ENCODE measurements at regions of chr11 and their contacts with region 1.

Region 1: DNA sequence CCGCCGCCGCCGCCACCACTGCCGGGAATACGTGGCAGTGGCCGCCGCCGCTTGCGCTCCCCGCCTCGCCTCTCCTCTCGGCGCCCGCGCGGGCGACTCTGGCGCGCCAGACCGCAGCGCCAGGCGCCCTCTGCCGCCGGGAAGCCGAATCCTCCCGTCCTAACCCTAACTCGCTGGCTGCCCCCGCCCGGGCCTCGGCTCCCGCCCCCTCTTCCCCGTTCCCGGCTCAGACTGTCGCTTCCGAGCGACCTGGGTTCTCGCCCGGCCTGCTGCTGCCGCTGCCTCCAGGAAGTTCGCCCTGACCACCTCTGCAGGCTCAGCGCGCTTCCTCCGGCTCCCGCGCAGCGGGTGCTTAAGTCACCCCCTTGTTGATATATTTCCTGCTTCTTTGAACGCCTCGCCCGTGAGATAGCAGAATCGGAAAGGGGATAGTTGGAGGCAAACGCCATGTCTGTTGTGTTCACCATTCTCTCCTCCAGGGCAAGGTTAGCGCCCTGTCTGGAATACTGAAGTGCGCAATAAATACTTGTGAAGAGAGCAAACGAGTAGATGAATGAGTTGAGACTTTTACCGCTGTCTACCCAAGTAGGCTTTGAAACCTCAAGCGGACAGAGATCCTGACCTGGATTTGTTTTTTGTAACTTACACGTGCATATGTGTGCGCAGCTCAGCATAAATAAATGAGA is at the start of gene SMCO4:
- DNase-seq: peak; percentile 88
- ATAC-seq: peak; percentile 81
- H3K4me3 Mint-ChIP-seq: peak within 1 kb of the TSS; percentile 89
- H3K27ac Mint-ChIP-seq: peak within 1 kb of the TSS; percentile 86
- H3K4me1 Mint-ChIP-seq: peaks cover 30% of the 10 kb centered on the region
- H3K27me3 Mint-ChIP-seq: no peaks in the 10 kb centered on the region
- total RNA-seq, gene SMCO4: 24.5 to 24.6 TPM

Region 2: GRCh38 chr11:92941676-92942571 is 601.5 kb before region 1 on chr11:
- CTCF ChIA-PET with region 1: interaction called, 3 read pairs
- POLR2A ChIA-PET with region 1: no interaction called
- intact Hi-C with region 1: loop called in 1 of 2 experiments (anchors 5 kb)
- DNase-seq: peak; percentile 38
- ATAC-seq: peak; percentile 65
- H3K4me3 Mint-ChIP-seq: no peak overlapping the region
- H3K27ac Mint-ChIP-seq: no peak overlapping the region
- H3K4me1 Mint-ChIP-seq: no peaks in the 10 kb centered on the region
- H3K27me3 Mint-ChIP-seq: peaks cover 19% of the 10 kb centered on the region

Region 3: GRCh38 chr11:93197380-93198214 is 345.8 kb before region 1 on chr11 and contains the start of gene SLC36A4:
- CTCF ChIA-PET with region 1: no interaction called
- POLR2A ChIA-PET with region 1: no interaction called
- intact Hi-C with region 1: loop called in 1 of 2 experiments (anchors 1 kb)
- DNase-seq: peak; percentile 94
- ATAC-seq: peak; percentile 92
- H3K4me3 Mint-ChIP-seq: peak within 1 kb of the TSS; percentile 94
- H3K27ac Mint-ChIP-seq: peak within 1 kb of the TSS; percentile 97
- H3K4me1 Mint-ChIP-seq: peaks cover 19% of the 10 kb centered on the region
- H3K27me3 Mint-ChIP-seq: peaks cover 1% of the 10 kb centered on the region
- total RNA-seq, gene SLC36A4: 13.9 to 16.1 TPM

Region 4: GRCh38 chr11:93330446-93330984 is 212.9 kb before region 1 on chr11 and contains the start of gene DEUP1:
- CTCF ChIA-PET with region 1: no interaction called
- POLR2A ChIA-PET with region 1: no interaction called
- intact Hi-C with region 1: loop called in 1 of 2 experiments (anchors 5 kb)
- DNase-seq: peak; percentile 65
- ATAC-seq: peak; percentile 65
- H3K4me3 Mint-ChIP-seq: peak within 1 kb of the TSS; percentile 58
- H3K27ac Mint-ChIP-seq: no peak within 1 kb of the TSS
- H3K4me1 Mint-ChIP-seq: peaks cover 7% of the 10 kb centered on the region
- H3K27me3 Mint-ChIP-seq: peaks cover 37% of the 10 kb centered on the region
- total RNA-seq, gene DEUP1: not detected

Region 5: GRCh38 chr11:93652161-93652597 is 108.7 kb after region 1 on chr11:
- CTCF ChIA-PET with region 1: interaction called, 3 read pairs
- POLR2A ChIA-PET with region 1: no interaction called
- intact Hi-C with region 1: loop called in 1 of 2 experiments (anchors 2 kb)
- DNase-seq: peak; percentile 22
- ATAC-seq: no peak
- H3K4me3 Mint-ChIP-seq: no peak overlapping the region
- H3K27ac Mint-ChIP-seq: no peak overlapping the region
- H3K4me1 Mint-ChIP-seq: peaks cover 12% of the 10 kb centered on the region
- H3K27me3 Mint-ChIP-seq: peaks cover 5% of the 10 kb centered on the region

Region 6: GRCh38 chr11:93741094-93741881 is 197.9 kb after region 1 on chr11 and contains the starts of genes C11orf54 and TAF1D:
- CTCF ChIA-PET with region 1: no interaction called
- POLR2A ChIA-PET with region 1: no interaction called
- intact Hi-C with region 1: loop called in 1 of 2 experiments (anchors 5 kb)
- DNase-seq: peak; percentile 97
- ATAC-seq: peak; percentile 80
- H3K4me3 Mint-ChIP-seq: peak within 1 kb of the TSS; percentile 99
- H3K27ac Mint-ChIP-seq: peak within 1 kb of the TSS; percentile 98
- H3K4me1 Mint-ChIP-seq: peaks cover 38% of the 10 kb centered on the region
- H3K27me3 Mint-ChIP-seq: no peaks in the 10 kb centered on the region
- total RNA-seq, gene C11orf54: 13.8 to 15.7 TPM
- total RNA-seq, gene TAF1D: 326 to 355 TPM

Region 7: DNA sequence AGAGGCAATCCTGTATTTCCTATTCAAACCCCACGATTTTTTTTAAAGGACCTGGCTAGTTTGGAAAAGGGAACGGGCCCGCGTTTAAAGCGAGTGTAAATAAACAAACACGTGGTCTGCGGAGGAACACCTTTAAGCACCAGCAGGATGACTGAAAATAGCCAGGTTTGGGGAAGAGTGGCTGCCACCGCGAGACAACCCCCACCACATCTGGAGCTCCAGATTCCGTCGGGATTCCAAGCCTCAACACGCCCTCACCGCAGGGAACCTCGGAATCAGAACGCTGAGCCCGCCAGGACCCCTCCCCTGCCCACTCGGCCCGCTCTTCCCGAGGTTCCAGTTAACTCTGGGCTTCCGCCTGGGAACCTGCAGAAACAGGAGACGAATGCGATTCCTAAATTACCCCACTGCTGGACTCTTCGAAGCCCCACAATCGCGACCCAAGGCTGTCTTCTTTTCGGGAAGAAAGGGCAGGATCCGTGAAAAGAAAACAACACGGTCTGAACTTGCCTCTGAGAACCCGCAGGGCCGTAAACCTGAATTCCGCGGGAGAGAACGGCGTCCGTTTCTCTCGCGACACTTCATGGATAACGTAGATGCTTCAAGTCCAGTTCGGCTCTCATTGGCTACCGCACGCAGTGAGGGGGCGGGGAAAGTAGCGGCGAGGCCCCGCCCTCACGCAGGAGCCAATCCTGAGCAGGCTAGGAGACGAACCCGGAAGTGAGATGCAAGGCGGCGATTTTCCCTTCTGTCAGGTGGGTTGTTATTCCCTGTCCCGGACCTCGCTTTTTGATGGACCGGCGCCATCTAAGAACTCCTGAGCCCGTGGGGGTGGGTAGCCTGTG is 950.1 kb after region 1 on chr11 and contains the starts of genes ANKRD49 and MRE11:
- CTCF ChIA-PET with region 1: no interaction called
- POLR2A ChIA-PET with region 1: no interaction called
- intact Hi-C with region 1: loop called in 1 of 2 experiments (anchors 5 kb)
- DNase-seq: peak; percentile 97
- ATAC-seq: peak; percentile 100
- H3K4me3 Mint-ChIP-seq: peak within 1 kb of the TSS; percentile 94
- H3K27ac Mint-ChIP-seq: peak within 1 kb of the TSS; percentile 97
- H3K4me1 Mint-ChIP-seq: peaks cover 24% of the 10 kb centered on the region
- H3K27me3 Mint-ChIP-seq: no peaks in the 10 kb centered on the region
- total RNA-seq, gene ANKRD49: 20.8 to 22.4 TPM
- total RNA-seq, gene MRE11: 36.8 to 51.3 TPM

Measured in activated CD4-positive, alpha-beta T cell treated with anti-CD3 and anti-CD28 coated beads for 36 hours (primary cell).